PC-9 (cell line): ENCODE measurements at regions of chr3 and their contacts with region 1.

Region 1: DNA sequence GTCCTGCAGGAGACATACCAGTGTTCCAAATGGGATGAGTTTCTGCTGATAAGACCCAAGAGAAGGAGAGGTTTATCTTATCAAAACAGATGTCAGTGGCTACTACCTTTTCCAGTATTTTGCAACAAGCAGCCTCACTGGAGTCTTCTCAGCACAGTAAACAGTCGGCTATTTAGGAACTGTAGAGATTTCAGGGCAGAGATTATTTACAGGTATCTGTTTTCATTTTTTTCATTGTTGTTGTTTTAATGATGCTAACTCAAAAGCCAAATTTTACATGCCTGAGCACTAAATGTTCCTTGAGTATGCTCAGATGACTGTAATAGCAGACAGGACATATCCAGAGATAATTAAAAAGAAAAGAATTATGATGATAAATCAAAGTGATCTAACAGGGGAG is 252.1 kb downstream of the EPHA6 start:
- DNase-seq: no peak
- H3K4me3 ChIP-seq: no peak overlapping the region
- H3K27ac ChIP-seq: no peak overlapping the region
- H3K4me1 ChIP-seq: no peaks in the 10 kb centered on the region
- H3K27me3 ChIP-seq: no peaks in the 10 kb centered on the region
- CTCF ChIP-seq: no peak

Region 2: DNA sequence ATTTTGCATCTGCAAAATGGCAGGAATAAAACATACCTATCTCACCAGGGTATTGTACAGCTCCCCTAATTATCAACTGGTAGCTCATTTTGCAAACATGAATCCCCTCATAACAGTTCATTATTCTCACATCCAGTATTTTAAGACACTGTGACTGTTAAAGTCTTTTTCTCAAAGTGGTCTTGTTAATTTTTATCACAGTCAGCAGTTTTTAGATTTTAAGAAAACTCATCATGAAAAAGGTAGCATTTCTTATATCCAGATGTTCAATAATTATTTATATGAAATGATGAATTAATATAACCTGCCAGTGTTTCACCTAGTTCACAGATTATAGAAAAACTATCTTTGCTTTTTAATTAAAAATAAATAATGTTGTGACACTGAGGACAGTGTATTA is 343.1 kb after region 1 on chr3:
- CTCF ChIA-PET with region 1: no interaction called
- POLR2A ChIA-PET with region 1: no interaction called
- intact Hi-C with region 1: loop called (anchors 5 kb)
- DNase-seq: no peak
- H3K4me3 ChIP-seq: no peak overlapping the region
- H3K27ac ChIP-seq: no peak overlapping the region
- H3K4me1 ChIP-seq: no peaks in the 10 kb centered on the region
- H3K27me3 ChIP-seq: no peaks in the 10 kb centered on the region
- CTCF ChIP-seq: no peak